OCI-LY7 (cell line): ENCODE measurements at regions of chr6 and their contacts with region 1.

Region 1: GRCh38 chr6:373751-374724 is 17.5 kb upstream of the IRF4 start:
- DNase-seq: no peak
- H3K4me3 ChIP-seq: no peak overlapping the region
- H3K27ac ChIP-seq: no peak overlapping the region
- H3K4me1 ChIP-seq: peaks cover 49% of the 10 kb centered on the region
- CTCF ChIP-seq: no peak

Region 2: DNA sequence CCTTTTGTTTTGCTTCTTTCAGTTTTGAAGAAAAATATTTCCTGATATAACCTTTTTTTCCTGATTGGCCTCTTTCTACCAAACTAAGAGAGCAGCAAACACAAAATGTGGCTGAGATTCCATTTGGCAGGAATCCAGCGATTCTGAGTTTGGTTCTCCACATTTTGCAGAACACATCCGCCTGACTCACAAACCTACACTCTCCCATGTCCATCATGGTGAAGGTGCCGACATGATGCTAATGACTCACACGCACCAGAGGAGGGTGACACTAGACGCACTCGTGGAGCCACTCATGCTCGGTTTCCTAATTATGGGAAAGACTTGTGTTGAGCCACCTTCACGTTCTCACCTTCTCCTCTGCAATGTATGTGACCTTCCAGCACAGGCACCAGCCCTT is 127.7 kb before region 1 on chr6:
- CTCF ChIA-PET with region 1: no interaction called
- POLR2A ChIA-PET with region 1: no interaction called
- intact Hi-C with region 1: no loop called
- DNase-seq: no peak
- H3K4me3 ChIP-seq: no peak overlapping the region
- H3K27ac ChIP-seq: no peak overlapping the region
- H3K4me1 ChIP-seq: peaks cover 21% of the 10 kb centered on the region
- CTCF ChIP-seq: no peak

Region 3: DNA sequence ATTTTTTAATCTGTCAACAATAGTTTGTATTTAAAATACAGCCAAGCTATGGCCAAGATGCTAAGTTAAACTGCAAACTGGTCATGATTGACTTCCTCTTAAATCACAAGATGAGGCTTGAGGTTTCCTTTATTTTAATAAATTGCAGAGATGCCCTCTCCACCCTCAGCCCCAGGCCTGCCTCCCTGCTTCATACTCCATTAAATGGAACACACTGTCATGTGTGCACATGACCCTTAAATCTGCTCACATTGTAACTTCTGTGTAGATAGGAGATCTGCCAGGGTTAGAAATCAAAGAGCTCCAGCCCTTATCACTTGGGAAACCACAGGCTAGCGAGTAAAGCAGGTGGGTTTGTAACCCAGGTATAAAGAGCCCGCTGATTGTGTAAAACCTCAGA is 61.0 kb before region 1 on chr6:
- CTCF ChIA-PET with region 1: no interaction called
- POLR2A ChIA-PET with region 1: interaction called, 14 read pairs
- intact Hi-C with region 1: no loop called
- DNase-seq: peak; percentile 63
- H3K4me3 ChIP-seq: peak overlapping the region; percentile 28
- H3K27ac ChIP-seq: peak overlapping the region; percentile 57
- H3K4me1 ChIP-seq: peaks cover 89% of the 10 kb centered on the region
- CTCF ChIP-seq: no peak

Region 4: GRCh38 chr6:422433-423054 is 48.5 kb after region 1 on chr6:
- CTCF ChIA-PET with region 1: no interaction called
- POLR2A ChIA-PET with region 1: no interaction called
- intact Hi-C with region 1: no loop called
- DNase-seq: no peak
- H3K4me3 ChIP-seq: no peak overlapping the region
- H3K27ac ChIP-seq: no peak overlapping the region
- H3K4me1 ChIP-seq: no peaks in the 10 kb centered on the region
- CTCF ChIP-seq: no peak